ENCODE measurements at regions of chr1 and their contacts with region 1.

Region 1: GRCh38 chr1:201511941-201512539 is 5.1 kb upstream of the CSRP1 start:
- DNase-seq: no peak
- ATAC-seq: peak; percentile 14
- H3K4me3 ChIP-seq: no peak overlapping the region
- H3K4me3 Mint-ChIP-seq: no peak overlapping the region
- H3K27ac ChIP-seq: no peak overlapping the region
- H3K27ac Mint-ChIP-seq: no peak overlapping the region
- H3K4me1 ChIP-seq: peaks cover 9 to 10% of the 10 kb centered on the region in 2 donors
- H3K4me1 Mint-ChIP-seq: peaks cover 0 to 28% (median 19%) of the 10 kb centered on the region in 7 donors
- H3K27me3 ChIP-seq: no peaks in the 10 kb centered on the region
- H3K27me3 Mint-ChIP-seq: no peaks in the 10 kb centered on the region

Region 2: DNA sequence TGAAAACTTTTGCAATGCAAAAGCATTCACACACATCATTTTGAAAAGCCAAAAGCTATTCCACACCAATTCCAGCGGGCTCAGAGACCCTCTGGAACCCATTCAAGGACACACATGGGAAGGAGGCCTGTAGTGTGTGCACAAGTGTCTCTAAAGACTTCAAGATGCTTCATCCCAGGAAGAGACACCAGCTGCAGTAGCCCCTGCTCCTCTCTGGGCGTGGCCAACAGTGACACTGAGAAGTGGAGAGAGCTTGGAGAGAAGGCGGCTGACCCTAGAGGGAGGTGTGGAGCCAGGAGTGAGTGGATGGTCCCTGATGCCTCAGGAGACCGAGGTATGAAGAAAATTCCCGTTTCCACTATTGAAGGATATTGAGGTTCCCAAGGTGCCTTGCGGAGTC is 75.6 kb before region 1 on chr1:
- CTCF ChIA-PET with region 1: interaction called, 5 read pairs
- POLR2A ChIA-PET with region 1: no interaction called
- intact Hi-C with region 1: loop called (anchors 1 kb)
- DNase-seq: no peak
- ATAC-seq: no peak
- H3K4me3 ChIP-seq: no peak overlapping the region
- H3K4me3 Mint-ChIP-seq: peak overlapping the region in 1 of 10 donors; percentile 26
- H3K27ac ChIP-seq: no peak overlapping the region
- H3K27ac Mint-ChIP-seq: peak overlapping the region in 1 of 9 donors; percentile 64
- H3K4me1 ChIP-seq: no peaks in the 10 kb centered on the region
- H3K4me1 Mint-ChIP-seq: peaks cover 3 to 10% (median 7%) of the 10 kb centered on the region in 7 donors
- H3K27me3 ChIP-seq: no peaks in the 10 kb centered on the region
- H3K27me3 Mint-ChIP-seq: peaks cover 11 to 34% (median 15%) of the 10 kb centered on the region in 5 donors

Region 3: DNA sequence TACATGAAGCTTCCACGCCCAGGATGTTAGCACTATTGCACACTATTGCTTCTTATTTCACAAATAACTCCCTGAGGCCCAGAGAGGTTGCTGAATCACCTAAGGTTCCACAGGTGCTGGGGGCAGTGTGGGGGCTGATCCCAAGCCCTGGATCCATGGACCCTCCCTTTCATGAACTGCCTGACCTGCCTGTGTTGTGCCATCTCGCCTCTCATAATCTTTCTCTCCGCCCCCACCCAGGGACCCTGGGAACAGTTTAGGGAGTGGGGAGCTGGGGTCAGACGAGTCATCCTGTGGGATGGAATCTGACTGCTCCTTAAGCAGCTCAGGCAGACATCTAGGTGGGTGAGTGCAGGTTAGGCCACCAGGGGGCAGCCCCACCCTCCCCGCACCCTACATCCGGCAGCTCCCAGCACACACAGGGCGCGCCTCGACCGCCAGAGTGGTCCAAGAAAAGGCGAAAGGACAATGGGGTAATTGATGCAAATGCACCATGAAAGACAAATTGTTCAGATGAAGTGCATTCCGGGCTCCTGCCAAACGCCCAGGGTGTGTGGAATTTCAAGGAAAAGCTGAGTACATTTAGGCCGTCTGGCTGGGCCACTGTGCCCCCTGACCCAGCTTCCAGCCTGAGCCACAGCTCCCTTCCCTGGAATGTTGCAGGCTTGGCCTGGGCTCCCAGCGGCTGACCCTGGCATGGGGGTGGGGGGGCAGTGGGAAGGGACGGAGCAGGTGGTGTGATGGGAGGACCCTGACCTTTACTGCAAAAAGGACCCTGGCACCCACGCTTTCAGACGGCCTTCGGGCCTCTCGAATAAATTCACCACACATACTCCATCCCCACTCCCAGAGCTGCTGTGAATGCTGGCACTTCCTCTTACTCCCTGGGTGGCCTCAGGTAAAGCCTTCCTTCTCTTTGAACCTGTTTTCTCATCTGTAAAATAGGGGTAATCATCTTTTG is 63.8 kb before region 1 on chr1:
- CTCF ChIA-PET with region 1: interaction called, 9 read pairs
- POLR2A ChIA-PET with region 1: no interaction called
- intact Hi-C with region 1: loop called (anchors 1 kb)
- DNase-seq: peak in 7 of 9 donors; percentile 21 to 62 (median 36)
- ATAC-seq: peak; percentile 90
- H3K4me3 ChIP-seq: no peak overlapping the region
- H3K4me3 Mint-ChIP-seq: no peak overlapping the region
- H3K27ac ChIP-seq: no peak overlapping the region
- H3K27ac Mint-ChIP-seq: peak overlapping the region in 1 of 9 donors; percentile 34
- H3K4me1 ChIP-seq: peaks cover 0 to 4% of the 10 kb centered on the region in 2 donors
- H3K4me1 Mint-ChIP-seq: peaks cover 0 to 35% (median 4%) of the 10 kb centered on the region in 7 donors
- H3K27me3 ChIP-seq: no peaks in the 10 kb centered on the region
- H3K27me3 Mint-ChIP-seq: peaks cover 7 to 27% (median 17%) of the 10 kb centered on the region in 5 donors

Region 4: DNA sequence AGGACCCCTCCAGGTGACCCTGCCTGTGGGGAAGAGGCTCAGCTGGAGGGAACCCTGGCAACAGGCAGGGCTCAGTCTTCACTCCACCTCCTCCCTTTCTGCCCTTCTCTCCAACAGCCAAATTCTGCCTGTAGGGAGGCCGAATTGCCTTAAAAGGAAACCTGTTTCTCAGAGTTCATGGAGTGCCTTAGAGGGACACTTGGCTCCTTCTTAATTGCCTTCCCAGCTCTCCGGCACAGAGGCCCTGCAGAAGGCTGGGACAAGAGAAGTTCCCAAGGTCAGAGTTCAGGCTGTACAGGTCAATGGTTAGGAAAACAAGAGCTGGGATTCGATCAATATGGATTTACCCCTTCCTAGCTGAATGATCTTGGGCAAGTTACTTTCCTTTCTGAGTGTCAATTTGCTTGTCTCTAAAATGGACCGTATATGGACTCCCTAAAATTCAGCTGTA is 11.3 kb before region 1 on chr1:
- CTCF ChIA-PET with region 1: interaction called, 29 read pairs
- POLR2A ChIA-PET with region 1: interaction called, 5 read pairs
- intact Hi-C with region 1: no loop called
- DNase-seq: no peak
- ATAC-seq: no peak
- H3K4me3 ChIP-seq: no peak overlapping the region
- H3K4me3 Mint-ChIP-seq: no peak overlapping the region
- H3K27ac ChIP-seq: no peak overlapping the region
- H3K27ac Mint-ChIP-seq: no peak overlapping the region
- H3K4me1 ChIP-seq: peaks cover 3 to 8% of the 10 kb centered on the region in 2 donors
- H3K4me1 Mint-ChIP-seq: peaks cover 23 to 35% (median 28%) of the 10 kb centered on the region in 7 donors
- H3K27me3 ChIP-seq: no peaks in the 10 kb centered on the region
- H3K27me3 Mint-ChIP-seq: no peaks in the 10 kb centered on the region

Region 5: DNA sequence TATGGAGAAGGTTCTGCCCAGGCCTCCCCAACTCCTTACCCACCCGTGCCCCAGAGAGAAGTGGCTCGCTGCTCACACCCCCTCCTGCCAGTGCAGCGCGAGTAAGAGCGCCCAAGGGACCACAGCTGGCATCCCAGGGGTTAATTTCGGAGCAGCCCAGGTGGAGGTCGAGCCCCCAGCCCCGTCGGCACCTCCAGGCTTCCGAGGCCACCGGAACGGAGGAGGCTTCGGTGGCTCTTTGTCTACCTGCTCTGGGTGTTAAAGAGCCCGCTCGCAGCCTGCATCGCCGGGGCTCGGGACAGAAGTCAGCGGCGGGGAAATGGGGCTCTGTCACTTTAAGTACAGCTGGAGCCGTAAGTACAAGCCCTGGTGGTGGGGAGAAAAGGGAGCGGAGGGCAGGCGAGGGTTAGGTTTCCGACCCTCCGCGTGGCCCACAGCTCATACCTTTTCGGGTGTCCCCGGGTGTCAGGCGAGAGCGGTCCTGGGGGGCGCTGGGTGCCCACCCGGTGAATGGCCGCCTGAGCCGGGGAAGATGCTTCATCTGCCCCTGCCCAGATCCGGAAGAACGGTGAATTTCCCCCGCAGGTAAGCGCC is 227.5 kb after region 1 on chr1:
- CTCF ChIA-PET with region 1: no interaction called
- POLR2A ChIA-PET with region 1: no interaction called
- intact Hi-C with region 1: no loop called
- DNase-seq: peak in 8 of 9 donors; percentile 43 to 62 (median 54)
- ATAC-seq: peak; percentile 90
- H3K4me3 ChIP-seq: peak overlapping the region; percentile 48
- H3K4me3 Mint-ChIP-seq: peak overlapping the region; percentile 71 to 97 (median 91)
- H3K27ac ChIP-seq: peak overlapping the region; percentile 45
- H3K27ac Mint-ChIP-seq: peak overlapping the region in 4 of 9 donors; percentile 53 to 76 (median 60)
- H3K4me1 ChIP-seq: no peaks in the 10 kb centered on the region
- H3K4me1 Mint-ChIP-seq: peaks cover 5 to 31% (median 18%) of the 10 kb centered on the region in 7 donors
- H3K27me3 ChIP-seq: peaks cover 0 to 8% of the 10 kb centered on the region in 2 donors
- H3K27me3 Mint-ChIP-seq: peaks cover 0 to 65% (median 0%) of the 10 kb centered on the region in 5 donors